ENCODE measurements at regions of chr12 and their contacts with region 1.

Region 1: GRCh38 chr12:115375186-115375991 is 691.4 kb upstream of the TBX3 start:
- DNase-seq: peak; percentile 59
- H3K4me3 Mint-ChIP-seq: no peak overlapping the region
- H3K27ac Mint-ChIP-seq: no peak overlapping the region
- H3K4me1 Mint-ChIP-seq: peaks cover 10% of the 10 kb centered on the region
- H3K27me3 Mint-ChIP-seq: no peaks in the 10 kb centered on the region

Region 2: DNA sequence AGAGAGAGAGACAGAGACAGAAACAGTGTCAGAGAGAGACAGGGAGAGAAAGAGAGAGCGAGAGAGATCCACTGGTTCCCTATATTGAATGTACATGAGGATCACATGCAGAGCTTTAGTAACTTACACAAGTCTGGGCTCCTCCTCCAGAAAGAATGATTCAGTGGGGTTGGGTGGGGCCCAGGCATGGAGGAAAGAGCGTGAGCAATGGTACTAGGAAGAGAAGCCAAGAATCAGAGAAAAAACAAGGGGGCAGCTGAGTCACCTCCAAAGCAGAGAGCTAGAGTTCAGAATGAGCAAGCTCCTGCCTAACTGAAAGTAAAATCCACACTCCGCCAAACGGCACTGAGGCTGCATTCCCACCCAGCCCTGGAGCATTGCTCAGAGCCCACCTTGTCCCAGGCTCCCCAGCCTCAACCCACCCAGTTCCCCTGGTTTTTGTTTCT is 21.4 kb before region 1 on chr12:
- intact Hi-C with region 1: loop called (anchors 1 kb)
- DNase-seq: peak; percentile 54
- H3K4me3 Mint-ChIP-seq: peak overlapping the region; percentile 61
- H3K27ac Mint-ChIP-seq: peak overlapping the region; percentile 84
- H3K4me1 Mint-ChIP-seq: peaks cover 3% of the 10 kb centered on the region
- H3K27me3 Mint-ChIP-seq: no peaks in the 10 kb centered on the region

Measured in activated CD4-positive, alpha-beta T cell treated with anti-CD3 and anti-CD28 coated beads, Interleukin-2, amount 10 ng/mL, durations not matched to agents 24 days and 14 days (primary cell).